ENCODE measurements at regions of chr10 and their contacts with region 1.

Region 1: DNA sequence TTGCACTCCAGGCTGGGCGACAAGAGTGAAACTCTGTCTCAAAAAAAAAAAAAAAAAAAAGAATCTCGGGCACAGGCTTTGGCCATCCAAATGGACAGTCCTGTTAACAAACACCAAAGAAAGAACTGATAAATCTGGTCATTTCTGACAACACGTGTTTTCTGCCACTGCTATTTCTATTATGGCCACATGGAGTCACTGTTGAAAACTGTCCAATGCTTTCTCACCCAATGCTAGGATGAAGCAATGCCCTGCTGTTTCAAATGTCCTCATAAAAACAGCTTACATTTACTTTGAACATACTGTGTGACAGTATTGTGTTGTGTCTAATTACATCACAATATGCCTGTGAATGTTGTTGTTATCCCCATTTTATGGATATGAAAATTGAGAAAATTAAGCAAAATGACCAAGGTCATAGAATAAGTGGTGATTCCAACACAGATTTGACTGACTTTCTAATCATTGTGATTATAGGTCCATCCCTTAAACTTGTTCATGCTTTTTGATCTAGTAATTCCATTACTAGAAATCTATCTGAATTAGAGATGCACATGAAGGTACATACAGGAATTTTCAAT is 19.9 kb upstream of the MAP3K8 start:
- DNase-seq: no peak

Region 2: GRCh38 chr10:30282221-30282620 is 131.9 kb before region 1 on chr10:
- intact Hi-C with region 1: no loop called
- DNase-seq: no peak

Region 3: DNA sequence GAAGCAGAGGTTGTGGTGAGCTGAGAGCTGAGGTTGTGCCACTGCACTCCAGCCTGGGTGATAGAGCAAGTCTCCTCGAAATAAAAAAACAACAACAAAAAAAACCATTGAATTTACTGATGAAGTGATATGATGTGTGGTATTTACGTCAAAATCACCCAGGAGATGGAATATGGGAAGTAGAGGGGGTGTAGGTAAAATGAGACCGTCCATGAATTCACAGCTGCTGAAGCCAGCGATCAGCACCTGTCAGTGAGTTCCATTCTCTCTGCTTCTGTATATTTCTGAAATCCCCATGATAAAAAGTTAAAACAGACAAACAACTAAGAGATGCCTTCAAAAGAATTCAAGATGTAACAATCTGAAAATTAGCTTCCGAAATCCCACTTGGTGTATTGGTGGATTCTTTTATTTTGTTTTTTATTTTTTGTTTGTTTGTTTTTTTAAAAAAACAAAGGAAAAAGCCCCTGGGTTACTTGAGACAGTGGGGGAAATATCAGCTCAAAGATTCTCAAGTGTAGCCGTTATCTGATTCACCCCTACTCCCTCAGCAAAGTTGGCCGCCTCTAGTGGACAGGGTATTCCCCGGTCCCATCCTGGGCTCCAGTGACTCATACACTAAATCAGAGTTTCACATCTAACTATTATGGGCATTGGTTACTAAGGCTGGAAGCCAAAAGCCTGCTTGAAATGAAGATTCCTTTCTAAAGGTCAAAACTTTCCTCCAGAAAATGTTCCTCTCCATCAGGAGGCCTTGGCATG is 96.3 kb after region 1 on chr10:
- intact Hi-C with region 1: no loop called
- DNase-seq: no peak

Region 4: GRCh38 chr10:30534465-30535144 is 120.5 kb after region 1 on chr10:
- intact Hi-C with region 1: loop called (anchors 2 kb)
- DNase-seq: peak in 9 of 10 donors; percentile 12 to 91 (median 66)

Measured in posterior cingulate gyrus (tissue), 11 donors.